Naive thymus-derived CD4-positive, alpha-beta T cell (primary cell): ENCODE measurements at regions of chr5 and their contacts with region 1.

Region 1: DNA sequence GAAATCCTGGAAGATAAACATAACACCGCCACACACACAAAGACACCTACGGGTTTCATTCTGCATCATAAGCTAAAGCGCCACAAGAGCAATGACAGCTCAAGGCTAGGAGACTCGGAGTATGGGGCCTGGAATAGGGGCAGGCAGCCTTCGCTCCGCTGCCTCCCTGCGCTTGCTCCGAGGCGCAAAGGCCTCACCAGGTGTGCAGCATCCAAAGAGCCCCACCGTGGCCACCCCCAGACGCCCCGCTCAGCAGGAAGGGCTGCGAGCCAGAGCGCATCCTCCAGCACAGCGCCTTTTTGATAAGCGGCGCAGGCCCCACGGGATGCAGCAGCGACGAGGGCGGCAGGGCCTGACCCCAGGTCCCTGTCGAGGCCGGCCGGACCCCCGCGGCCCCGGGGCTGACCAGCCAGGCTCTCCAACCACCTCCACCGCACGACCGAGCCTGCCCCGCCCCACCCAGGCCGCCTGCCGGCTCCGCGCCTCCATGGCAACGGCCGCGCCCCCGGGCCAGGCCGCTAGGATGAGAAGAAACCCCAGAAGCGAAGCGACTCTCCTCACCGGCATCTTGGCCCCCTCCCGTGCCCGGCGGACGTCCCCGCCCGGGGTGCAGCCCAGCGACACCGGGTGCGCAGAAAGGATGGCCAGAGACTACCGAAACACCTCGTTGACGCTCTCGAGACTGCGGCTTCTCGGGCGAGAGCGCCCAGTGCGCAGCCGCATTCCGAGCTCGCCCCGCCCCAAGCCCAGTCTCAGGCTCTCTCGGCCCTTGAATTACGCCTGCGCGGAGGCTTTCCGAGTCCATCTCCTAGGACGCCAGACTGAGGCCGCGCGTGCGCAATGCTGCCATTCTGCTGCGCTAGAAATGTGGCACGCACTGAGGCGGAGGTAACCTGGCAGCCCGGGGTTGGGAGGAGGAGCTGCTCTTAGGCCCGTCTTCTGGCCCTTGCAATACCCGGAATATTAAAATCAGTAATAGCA is at the start of gene KIF3A:
- DNase-seq: peak; percentile 93 to 98 (median 97)
- ATAC-seq: peak; percentile 95
- H3K4me3 ChIP-seq: peak within 1 kb of the TSS; percentile 96
- H3K4me3 Mint-ChIP-seq: peak within 1 kb of the TSS; percentile 87 to 94 (median 92)
- H3K27ac ChIP-seq: peak within 1 kb of the TSS; percentile 78
- H3K27ac Mint-ChIP-seq: peak within 1 kb of the TSS; percentile 84 to 94 (median 92)
- H3K4me1 ChIP-seq: peaks cover 13 to 18% of the 10 kb centered on the region in 2 donors
- H3K4me1 Mint-ChIP-seq: peaks cover 14 to 52% (median 39%) of the 10 kb centered on the region in 7 donors
- H3K27me3 ChIP-seq: no peaks in the 10 kb centered on the region
- H3K27me3 Mint-ChIP-seq: peaks cover 0 to 18% (median 2%) of the 10 kb centered on the region in 5 donors
- total RNA-seq, gene KIF3A: 10.5 to 30.0 (median 18.7) TPM

Region 2: DNA sequence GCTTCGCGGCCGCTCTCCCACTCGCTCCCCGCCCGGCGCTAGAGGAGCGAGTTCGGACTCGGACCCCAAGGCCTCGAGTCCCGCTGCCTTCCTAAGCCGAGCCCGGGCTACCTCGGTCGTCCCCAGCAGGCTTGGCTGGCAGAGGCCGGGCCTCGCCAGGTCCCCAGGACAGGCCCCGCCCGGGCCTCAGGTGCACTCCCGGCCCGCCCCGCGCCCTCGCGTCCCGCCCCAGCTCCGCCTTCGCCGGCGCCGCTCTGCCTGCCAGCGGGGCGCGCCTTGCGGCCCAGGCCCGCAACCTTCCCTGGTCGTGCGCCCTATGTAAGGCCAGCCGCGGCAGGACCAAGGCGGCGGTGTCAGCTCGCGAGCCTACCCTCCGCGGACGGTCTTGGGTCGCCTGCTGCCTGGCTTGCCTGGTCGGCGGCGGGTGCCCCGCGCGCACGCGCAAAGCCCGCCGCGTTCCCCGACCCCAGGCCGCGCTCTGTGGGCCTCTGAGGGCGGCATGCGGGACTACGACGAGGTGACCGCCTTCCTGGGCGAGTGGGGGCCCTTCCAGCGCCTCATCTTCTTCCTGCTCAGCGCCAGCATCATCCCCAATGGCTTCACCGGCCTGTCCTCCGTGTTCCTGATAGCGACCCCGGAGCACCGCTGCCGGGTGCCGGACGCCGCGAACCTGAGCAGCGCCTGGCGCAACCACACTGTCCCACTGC is 367.5 kb before region 1 on chr5 and contains the start of gene SLC22A5:
- CTCF ChIA-PET with region 1: no interaction called
- POLR2A ChIA-PET with region 1: interaction called, 3 read pairs
- intact Hi-C with region 1: loop called in 1 of 2 experiments (anchors 1 kb)
- DNase-seq: peak; percentile 65 to 79 (median 74)
- ATAC-seq: peak; percentile 93
- H3K4me3 ChIP-seq: peak within 1 kb of the TSS; percentile 72
- H3K4me3 Mint-ChIP-seq: peak within 1 kb of the TSS; percentile 76 to 92 (median 88)
- H3K27ac ChIP-seq: peak within 1 kb of the TSS; percentile 91
- H3K27ac Mint-ChIP-seq: peak within 1 kb of the TSS; percentile 64 to 93 (median 90)
- H3K4me1 ChIP-seq: peaks cover 7 to 11% of the 10 kb centered on the region in 2 donors
- H3K4me1 Mint-ChIP-seq: peaks cover 12 to 40% (median 31%) of the 10 kb centered on the region in 7 donors
- H3K27me3 ChIP-seq: no peaks in the 10 kb centered on the region
- H3K27me3 Mint-ChIP-seq: no peaks in the 10 kb centered on the region
- total RNA-seq, gene SLC22A5: 6.8 to 10.8 (median 8.0) TPM

Region 3: GRCh38 chr5:132556763-132557477 is 180.2 kb before region 1 on chr5 and contains the start of gene RAD50:
- CTCF ChIA-PET with region 1: no interaction called
- POLR2A ChIA-PET with region 1: interaction called, 4 read pairs
- intact Hi-C with region 1: loop called (anchors 1 kb)
- DNase-seq: peak; percentile 81 to 92 (median 90)
- ATAC-seq: peak; percentile 97
- H3K4me3 ChIP-seq: peak within 1 kb of the TSS; percentile 78
- H3K4me3 Mint-ChIP-seq: peak within 1 kb of the TSS; percentile 90 to 99 (median 96)
- H3K27ac ChIP-seq: peak within 1 kb of the TSS; percentile 76
- H3K27ac Mint-ChIP-seq: peak within 1 kb of the TSS; percentile 90 to 98 (median 97)
- H3K4me1 ChIP-seq: peaks cover 5 to 14% of the 10 kb centered on the region in 2 donors
- H3K4me1 Mint-ChIP-seq: peaks cover 10 to 37% (median 29%) of the 10 kb centered on the region in 7 donors
- H3K27me3 ChIP-seq: no peaks in the 10 kb centered on the region
- H3K27me3 Mint-ChIP-seq: no peaks in the 10 kb centered on the region
- total RNA-seq, gene RAD50: 18.0 to 35.4 (median 32.2) TPM

Region 4: GRCh38 chr5:132753135-132753987 is 16.2 kb after region 1 on chr5:
- CTCF ChIA-PET with region 1: interaction called, 4 read pairs
- POLR2A ChIA-PET with region 1: interaction called, 48 read pairs
- intact Hi-C with region 1: loop called in 1 of 2 experiments (anchors 1 kb)
- DNase-seq: peak in 1 of 9 donors; percentile 30
- ATAC-seq: peak; percentile 29
- H3K4me3 ChIP-seq: no peak overlapping the region
- H3K4me3 Mint-ChIP-seq: no peak overlapping the region
- H3K27ac ChIP-seq: no peak overlapping the region
- H3K27ac Mint-ChIP-seq: peak overlapping the region in 1 of 9 donors; percentile 54
- H3K4me1 ChIP-seq: no peaks in the 10 kb centered on the region
- H3K4me1 Mint-ChIP-seq: peaks cover 0 to 60% (median 3%) of the 10 kb centered on the region in 7 donors
- H3K27me3 ChIP-seq: no peaks in the 10 kb centered on the region
- H3K27me3 Mint-ChIP-seq: no peaks in the 10 kb centered on the region

Region 5: GRCh38 chr5:132866342-132867045 is 129.4 kb after region 1 on chr5 and contains the starts of genes GDF9 and UQCRQ:
- CTCF ChIA-PET with region 1: interaction called, 4 read pairs
- POLR2A ChIA-PET with region 1: interaction called, 4 read pairs
- intact Hi-C with region 1: loop called (anchors 1 to 5 kb)
- DNase-seq: peak; percentile 72 to 97 (median 93)
- ATAC-seq: peak; percentile 99
- H3K4me3 ChIP-seq: peak within 1 kb of the TSS; percentile 98
- H3K4me3 Mint-ChIP-seq: peak within 1 kb of the TSS; percentile 98 to 100 (median 100)
- H3K27ac ChIP-seq: peak within 1 kb of the TSS; percentile 96
- H3K27ac Mint-ChIP-seq: peak within 1 kb of the TSS; percentile 97 to 100 (median 100)
- H3K4me1 ChIP-seq: peaks cover 7 to 12% of the 10 kb centered on the region in 2 donors
- H3K4me1 Mint-ChIP-seq: peaks cover 11 to 36% (median 27%) of the 10 kb centered on the region in 7 donors
- H3K27me3 ChIP-seq: no peaks in the 10 kb centered on the region
- H3K27me3 Mint-ChIP-seq: peaks cover 0 to 8% (median 0%) of the 10 kb centered on the region in 5 donors
- total RNA-seq, gene GDF9: 0.48 to 2.0 (median 1.6) TPM
- total RNA-seq, gene UQCRQ: 101 to 338 (median 110) TPM

Region 6: GRCh38 chr5:133051580-133052332 is 314.6 kb after region 1 on chr5 and contains the start of gene HSPA4:
- CTCF ChIA-PET with region 1: no interaction called
- POLR2A ChIA-PET with region 1: no interaction called
- intact Hi-C with region 1: loop called (anchors 2 kb)
- DNase-seq: peak; percentile 86 to 99 (median 98)
- ATAC-seq: peak; percentile 91
- H3K4me3 ChIP-seq: peak within 1 kb of the TSS; percentile 92
- H3K4me3 Mint-ChIP-seq: peak within 1 kb of the TSS; percentile 91 to 99 (median 98)
- H3K27ac ChIP-seq: peak within 1 kb of the TSS; percentile 98
- H3K27ac Mint-ChIP-seq: peak within 1 kb of the TSS; percentile 99 to 100 (median 100)
- H3K4me1 ChIP-seq: peaks cover 17 to 19% of the 10 kb centered on the region in 2 donors
- H3K4me1 Mint-ChIP-seq: peaks cover 31 to 70% (median 52%) of the 10 kb centered on the region in 7 donors
- H3K27me3 ChIP-seq: no peaks in the 10 kb centered on the region
- H3K27me3 Mint-ChIP-seq: no peaks in the 10 kb centered on the region
- total RNA-seq, gene HSPA4: 42.1 to 103 (median 50.0) TPM